ENCODE measurements at regions of chr13 and their contacts with region 1.

Region 1: DNA sequence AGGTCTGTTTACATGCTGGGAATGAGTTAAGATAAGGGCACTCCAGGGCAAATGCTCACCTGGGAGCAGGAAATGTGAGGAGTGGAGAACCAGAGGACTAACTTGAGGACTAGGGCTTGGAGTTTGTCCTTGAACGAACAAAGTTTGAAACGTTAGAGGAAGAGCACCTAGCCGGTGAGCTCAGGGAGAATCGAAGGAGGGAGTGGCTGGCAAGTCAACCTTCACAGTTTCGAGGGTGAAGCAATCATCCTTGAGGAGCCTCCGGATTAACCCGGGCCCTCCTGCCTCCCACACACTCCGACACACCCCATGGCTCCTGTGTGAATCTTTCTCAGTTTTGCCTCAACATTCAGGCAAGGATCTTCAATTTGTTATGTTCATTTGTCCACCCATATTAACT is 58.6 kb downstream of the LMO7 start:
- DNase-seq: no peak
- ATAC-seq: no peak
- H3K4me3 Mint-ChIP-seq: no peak overlapping the region
- H3K27ac Mint-ChIP-seq: no peak overlapping the region
- H3K4me1 Mint-ChIP-seq: peaks cover 8% of the 10 kb centered on the region
- H3K27me3 Mint-ChIP-seq: no peaks in the 10 kb centered on the region
- CTCF ChIP-seq: no peak

Region 2: GRCh38 chr13:75666646-75667351 is 27.9 kb before region 1 on chr13:
- CTCF ChIA-PET with region 1: interaction called, 14 read pairs
- POLR2A ChIA-PET with region 1: no interaction called
- intact Hi-C with region 1: no loop called
- DNase-seq: no peak
- ATAC-seq: no peak
- H3K4me3 Mint-ChIP-seq: no peak overlapping the region
- H3K27ac Mint-ChIP-seq: no peak overlapping the region
- H3K4me1 Mint-ChIP-seq: no peaks in the 10 kb centered on the region
- H3K27me3 Mint-ChIP-seq: no peaks in the 10 kb centered on the region
- CTCF ChIP-seq: no peak

Region 3: GRCh38 chr13:75715601-75716523 is 21.1 kb after region 1 on chr13:
- CTCF ChIA-PET with region 1: interaction called, 23 read pairs
- POLR2A ChIA-PET with region 1: no interaction called
- intact Hi-C with region 1: no loop called
- DNase-seq: peak; percentile 47
- ATAC-seq: peak; percentile 91
- H3K4me3 Mint-ChIP-seq: no peak overlapping the region
- H3K27ac Mint-ChIP-seq: no peak overlapping the region
- H3K4me1 Mint-ChIP-seq: peaks cover 4% of the 10 kb centered on the region
- H3K27me3 Mint-ChIP-seq: no peaks in the 10 kb centered on the region
- CTCF ChIP-seq: no peak

Region 4: DNA sequence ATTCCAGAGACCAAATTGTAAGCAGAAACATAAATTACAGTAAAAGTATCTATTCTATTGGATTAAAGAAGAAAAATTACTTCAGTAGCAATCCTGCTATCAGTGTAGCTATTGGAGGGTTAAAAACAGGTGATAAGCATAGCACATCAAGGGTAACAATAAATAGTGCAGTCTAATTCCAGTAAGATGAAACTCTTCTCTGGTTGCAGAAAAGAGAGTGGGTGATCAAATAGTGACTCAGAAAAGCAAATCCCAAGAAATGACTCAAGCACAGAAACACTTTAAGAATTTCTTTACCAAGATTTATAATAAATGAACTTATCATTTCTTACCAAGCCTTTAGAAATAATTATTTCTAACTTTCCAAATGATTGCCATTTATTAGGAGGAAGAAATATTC is 77.1 kb after region 1 on chr13:
- CTCF ChIA-PET with region 1: interaction called, 13 read pairs
- POLR2A ChIA-PET with region 1: no interaction called
- intact Hi-C with region 1: loop called (anchors 10 kb)
- DNase-seq: no peak
- ATAC-seq: peak; percentile 95
- H3K4me3 Mint-ChIP-seq: no peak overlapping the region
- H3K27ac Mint-ChIP-seq: no peak overlapping the region
- H3K4me1 Mint-ChIP-seq: peaks cover 46% of the 10 kb centered on the region
- H3K27me3 Mint-ChIP-seq: no peaks in the 10 kb centered on the region
- CTCF ChIP-seq: no peak

Region 5: DNA sequence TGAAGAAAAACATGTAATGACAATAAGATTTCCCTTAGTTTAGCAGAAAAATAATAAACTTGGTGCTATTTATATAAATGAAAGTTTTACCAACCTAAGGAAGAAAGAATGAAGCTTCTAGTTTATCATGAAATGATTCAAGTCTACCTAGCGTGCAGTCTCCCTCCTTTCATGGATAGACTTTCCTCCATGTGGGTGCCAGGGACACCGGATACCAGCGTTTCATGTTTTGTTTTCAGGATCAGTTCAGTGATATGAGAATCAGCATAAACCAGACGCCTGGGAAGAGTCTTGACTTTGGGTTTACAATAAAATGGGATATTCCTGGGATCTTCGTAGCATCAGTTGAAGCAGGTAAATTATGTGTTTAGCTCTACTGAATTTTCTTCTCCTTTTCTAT is 138.1 kb after region 1 on chr13:
- CTCF ChIA-PET with region 1: interaction called, 19 read pairs
- POLR2A ChIA-PET with region 1: no interaction called
- intact Hi-C with region 1: no loop called
- DNase-seq: no peak
- ATAC-seq: no peak
- H3K4me3 Mint-ChIP-seq: no peak overlapping the region
- H3K27ac Mint-ChIP-seq: no peak overlapping the region
- H3K4me1 Mint-ChIP-seq: no peaks in the 10 kb centered on the region
- H3K27me3 Mint-ChIP-seq: no peaks in the 10 kb centered on the region
- CTCF ChIP-seq: no peak

Region 6: GRCh38 chr13:75864718-75865117 is 170.0 kb after region 1 on chr13:
- CTCF ChIA-PET with region 1: interaction called, 85 read pairs
- POLR2A ChIA-PET with region 1: no interaction called
- intact Hi-C with region 1: loop called (anchors 5 kb)
- DNase-seq: no peak
- ATAC-seq: no peak
- H3K4me3 Mint-ChIP-seq: no peak overlapping the region
- H3K27ac Mint-ChIP-seq: no peak overlapping the region
- H3K4me1 Mint-ChIP-seq: no peaks in the 10 kb centered on the region
- H3K27me3 Mint-ChIP-seq: no peaks in the 10 kb centered on the region
- CTCF ChIP-seq: no peak

Region 7: GRCh38 chr13:75902166-75903104 is 207.7 kb after region 1 on chr13:
- CTCF ChIA-PET with region 1: interaction called, 10 read pairs
- POLR2A ChIA-PET with region 1: no interaction called
- intact Hi-C with region 1: no loop called
- DNase-seq: no peak
- ATAC-seq: no peak
- H3K4me3 Mint-ChIP-seq: no peak overlapping the region
- H3K27ac Mint-ChIP-seq: no peak overlapping the region
- H3K4me1 Mint-ChIP-seq: no peaks in the 10 kb centered on the region
- H3K27me3 Mint-ChIP-seq: peaks cover 7% of the 10 kb centered on the region
- CTCF ChIP-seq: no peak